Caco-2 (cell line): ENCODE measurements at regions of chr19 and their contacts with region 1.

Region 1: GRCh38 chr19:36014029-36014924 is at the start of gene ALKBH6:
- DNase-seq: peak; percentile 99
- H3K4me3 ChIP-seq: peak within 1 kb of the TSS; percentile 72
- H3K4me3 Mint-ChIP-seq: peak within 1 kb of the TSS; percentile 98
- H3K27ac Mint-ChIP-seq: peak within 1 kb of the TSS; percentile 92
- H3K4me1 ChIP-seq: peaks cover 12% of the 10 kb centered on the region
- H3K4me1 Mint-ChIP-seq: peaks cover 34% of the 10 kb centered on the region
- H3K27me3 ChIP-seq: no peaks in the 10 kb centered on the region
- H3K27me3 Mint-ChIP-seq: no peaks in the 10 kb centered on the region
- CTCF ChIP-seq: no peak
- total RNA-seq, gene ALKBH6: 29.4 and 30.8 TPM in 2 replicates

Region 2: DNA sequence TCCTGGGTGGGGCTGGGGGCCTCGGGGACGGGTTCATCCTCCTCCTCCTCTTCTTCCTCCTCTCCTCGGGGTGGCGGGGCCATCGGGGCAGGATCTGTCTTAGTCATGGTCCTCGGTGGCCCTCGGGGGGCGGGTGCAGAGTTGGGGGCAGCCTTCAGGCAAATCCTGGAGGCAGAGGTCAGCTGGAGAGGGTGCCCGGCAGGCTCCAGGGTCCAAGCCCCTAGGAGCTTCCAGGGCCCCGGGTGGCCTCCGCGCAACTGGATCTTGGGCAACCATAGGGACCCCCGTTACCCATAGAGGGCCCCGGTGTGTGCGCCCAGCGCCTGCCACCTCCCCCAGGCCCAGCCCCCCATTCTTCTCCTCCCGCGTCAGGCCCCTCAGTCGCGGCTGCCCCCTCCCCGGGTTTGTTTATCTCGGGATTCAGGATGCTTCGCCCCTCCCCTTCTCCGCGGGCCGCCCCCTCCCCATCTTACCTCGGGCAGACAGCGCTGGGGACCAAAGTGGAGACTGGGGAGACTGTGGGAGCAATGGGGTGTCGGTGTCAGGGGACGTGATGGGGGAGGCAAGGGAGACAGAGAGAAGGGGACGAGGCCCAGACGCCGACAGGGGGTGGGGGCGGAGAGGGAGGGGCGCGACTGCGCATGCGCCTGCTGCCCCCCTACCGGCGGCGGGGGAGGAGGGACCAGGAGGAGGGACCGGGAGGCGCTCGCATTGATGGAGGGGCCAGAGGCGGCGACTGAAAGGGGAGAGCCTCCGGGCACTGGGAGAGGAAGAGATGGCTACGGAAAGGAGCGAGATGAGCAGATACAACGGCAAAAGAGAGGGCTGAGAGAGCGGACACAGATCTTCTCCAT is 18.2 kb after region 1 on chr19 and contains the start of gene CLIP3:
- CTCF ChIA-PET with region 1: interaction called, 7 read pairs
- POLR2A ChIA-PET with region 1: interaction called, 10 read pairs
- intact Hi-C with region 1: no loop called
- DNase-seq: no peak
- H3K4me3 ChIP-seq: no peak within 1 kb of the TSS
- H3K4me3 Mint-ChIP-seq: no peak within 1 kb of the TSS
- H3K27ac Mint-ChIP-seq: no peak within 1 kb of the TSS
- H3K4me1 ChIP-seq: no peaks in the 10 kb centered on the region; the same call in 1 of the 2 replicates
- H3K4me1 Mint-ChIP-seq: peaks cover 12% of the 10 kb centered on the region
- H3K27me3 ChIP-seq: no peaks in the 10 kb centered on the region
- H3K27me3 Mint-ChIP-seq: no peaks in the 10 kb centered on the region
- CTCF ChIP-seq: no peak
- total RNA-seq, gene CLIP3: 1.7 and 2.2 TPM in 2 replicates

Region 3: GRCh38 chr19:36114763-36115452 is 100.6 kb after region 1 on chr19 and contains the start of gene POLR2I:
- CTCF ChIA-PET with region 1: no interaction called
- POLR2A ChIA-PET with region 1: interaction called, 8 read pairs
- intact Hi-C with region 1: loop called (anchors 1 kb)
- DNase-seq: peak; percentile 100
- H3K4me3 ChIP-seq: peak within 1 kb of the TSS; percentile 92
- H3K4me3 Mint-ChIP-seq: peak within 1 kb of the TSS; percentile 92
- H3K27ac Mint-ChIP-seq: peak within 1 kb of the TSS; percentile 96
- H3K4me1 ChIP-seq: peaks cover 9% of the 10 kb centered on the region; the same call in 1 of the 2 replicates
- H3K4me1 Mint-ChIP-seq: peaks cover 32% of the 10 kb centered on the region
- H3K27me3 ChIP-seq: no peaks in the 10 kb centered on the region
- H3K27me3 Mint-ChIP-seq: no peaks in the 10 kb centered on the region
- CTCF ChIP-seq: no peak
- total RNA-seq, gene POLR2I: 121 and 129 TPM in 2 replicates